Activated T-helper 1 cell treated with anti-CD3 and anti-CD28 coated beads, Interleukin-12 subunit alpha, Interleukin-12 subunit beta, Interleukin-2, Interleukin-4 antibody, amounts not matched to agents 30 ng/mL and 10 ng/mL and 1 ng/mL, durations not matched to agents 14 hours and 24 hours and 36 hours (primary cell): ENCODE measurements at regions of chr22 and their contacts with region 1.

Region 1: DNA sequence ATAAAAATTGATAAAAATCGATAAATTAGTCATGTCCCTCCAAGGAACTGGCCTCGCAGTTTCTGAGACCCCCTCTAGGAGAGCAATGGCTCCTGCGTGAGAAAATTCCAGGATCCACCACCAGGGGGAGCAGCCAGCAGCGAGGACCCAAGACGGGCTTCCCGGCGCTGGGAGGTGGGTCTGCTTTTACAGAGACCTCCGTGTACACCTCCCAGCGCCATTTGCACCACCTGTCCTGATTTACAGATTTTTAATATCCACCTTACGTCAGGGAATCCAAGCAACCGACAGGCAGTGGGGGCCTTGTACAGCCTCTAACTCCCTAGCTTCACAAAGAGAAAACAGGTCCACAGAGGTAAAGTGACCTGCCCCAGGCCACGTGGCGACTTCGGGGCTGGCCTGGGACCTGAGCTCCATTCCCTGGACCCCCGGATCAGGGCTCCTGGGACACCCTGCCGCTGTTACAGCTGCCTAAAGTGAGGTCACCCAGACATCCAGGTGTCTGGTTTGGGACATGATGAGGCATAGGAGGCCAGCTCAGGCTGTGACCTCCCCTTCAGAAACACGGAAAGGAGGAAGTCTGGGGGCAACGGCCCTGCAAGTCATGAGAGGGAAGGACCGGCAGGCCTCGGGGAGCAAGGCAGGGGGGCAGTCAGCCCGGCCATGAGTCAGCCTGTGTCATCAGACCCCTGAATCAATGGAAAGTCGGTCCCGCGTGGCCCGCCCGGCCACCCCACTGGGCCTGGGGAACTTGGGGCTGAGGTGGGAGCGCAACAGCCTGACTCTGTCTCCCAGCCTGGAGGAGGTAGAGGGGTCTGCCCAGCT is 3.5 kb downstream of the OSM start:
- DNase-seq: peak; percentile 67
- H3K4me3 Mint-ChIP-seq: peak overlapping the region; percentile 95
- H3K27ac Mint-ChIP-seq: peak overlapping the region; percentile 94
- H3K4me1 Mint-ChIP-seq: peaks cover 64% of the 10 kb centered on the region
- H3K27me3 Mint-ChIP-seq: no peaks in the 10 kb centered on the region

Region 2: GRCh38 chr22:29603358-29604075 is 659.6 kb before region 1 on chr22 and contains the start of gene NF2:
- intact Hi-C with region 1: loop called (anchors 5 kb)
- DNase-seq: peak; percentile 99
- H3K4me3 Mint-ChIP-seq: peak within 1 kb of the TSS; percentile 96
- H3K27ac Mint-ChIP-seq: peak within 1 kb of the TSS; percentile 98
- H3K4me1 Mint-ChIP-seq: peaks cover 23% of the 10 kb centered on the region
- H3K27me3 Mint-ChIP-seq: no peaks in the 10 kb centered on the region
- total RNA-seq, gene NF2: 65.7 and 66.1 TPM in 2 replicates

Region 3: GRCh38 chr22:30150212-30150611 is 112.9 kb before region 1 on chr22:
- intact Hi-C with region 1: no loop called
- DNase-seq: no peak
- H3K4me3 Mint-ChIP-seq: no peak overlapping the region
- H3K27ac Mint-ChIP-seq: no peak overlapping the region
- H3K4me1 Mint-ChIP-seq: peaks cover 27% of the 10 kb centered on the region
- H3K27me3 Mint-ChIP-seq: no peaks in the 10 kb centered on the region

Region 4: GRCh38 chr22:30167296-30167695 is 95.8 kb before region 1 on chr22:
- intact Hi-C with region 1: loop called (anchors 2 kb)
- DNase-seq: no peak
- H3K4me3 Mint-ChIP-seq: no peak overlapping the region
- H3K27ac Mint-ChIP-seq: no peak overlapping the region
- H3K4me1 Mint-ChIP-seq: peaks cover 16% of the 10 kb centered on the region
- H3K27me3 Mint-ChIP-seq: no peaks in the 10 kb centered on the region

Region 5: GRCh38 chr22:30196141-30196879 is 66.8 kb before region 1 on chr22:
- intact Hi-C with region 1: loop called (anchors 1 kb)
- DNase-seq: peak; percentile 59
- H3K4me3 Mint-ChIP-seq: peak overlapping the region; percentile 64
- H3K27ac Mint-ChIP-seq: peak overlapping the region; percentile 96
- H3K4me1 Mint-ChIP-seq: peaks cover 74% of the 10 kb centered on the region
- H3K27me3 Mint-ChIP-seq: no peaks in the 10 kb centered on the region

Region 6: GRCh38 chr22:30289134-30289979 is 26.2 kb after region 1 on chr22 and contains the start of gene CASTOR1:
- intact Hi-C with region 1: loop called (anchors 1 kb)
- DNase-seq: peak; percentile 90
- H3K4me3 Mint-ChIP-seq: peak within 1 kb of the TSS; percentile 87
- H3K27ac Mint-ChIP-seq: peak within 1 kb of the TSS; percentile 81
- H3K4me1 Mint-ChIP-seq: peaks cover 56% of the 10 kb centered on the region
- H3K27me3 Mint-ChIP-seq: no peaks in the 10 kb centered on the region
- total RNA-seq, gene CASTOR1: 5.6 and 8.8 TPM in 2 replicates

Region 7: DNA sequence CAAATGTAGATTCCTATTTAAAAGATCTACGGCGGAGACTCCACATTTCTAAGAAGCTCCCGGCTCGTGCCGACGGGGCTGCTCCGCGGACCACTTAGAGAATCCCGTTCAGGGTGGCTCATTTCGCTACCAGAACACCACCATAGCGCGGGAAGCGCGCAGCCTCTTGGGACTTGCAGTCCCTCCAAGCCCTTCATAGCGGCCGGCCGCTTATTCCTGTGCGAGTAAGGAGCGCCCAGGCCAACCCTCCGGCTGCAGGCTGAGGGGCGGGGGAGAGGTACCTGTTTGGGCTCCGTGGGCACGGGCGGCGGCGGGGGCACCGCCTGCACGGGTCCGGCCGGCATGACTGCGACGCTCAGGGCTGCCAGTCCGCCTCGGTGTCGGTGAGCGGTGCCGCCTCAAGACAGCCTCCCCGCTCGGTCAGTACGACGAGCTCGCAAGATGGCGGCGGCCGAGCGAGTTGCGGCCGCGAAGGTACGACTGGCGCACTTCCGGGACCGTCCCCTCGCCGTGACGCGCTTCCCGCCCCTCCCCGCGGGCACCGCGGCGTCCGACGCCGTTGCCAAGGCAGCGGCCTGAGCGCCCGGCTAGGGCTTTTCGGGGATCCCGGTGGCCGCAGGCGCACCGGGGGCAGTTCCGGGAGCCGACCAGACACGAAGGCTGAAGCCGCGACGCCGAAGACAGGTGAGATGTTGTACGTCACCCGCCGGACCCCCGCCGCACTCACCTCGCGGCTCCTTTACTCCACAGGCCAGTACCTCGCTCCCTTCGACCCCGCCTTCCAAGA is 93.5 kb after region 1 on chr22 and contains the starts of genes CCDC157 and SF3A1:
- intact Hi-C with region 1: loop called (anchors 1 kb)
- DNase-seq: peak; percentile 88
- H3K4me3 Mint-ChIP-seq: peak within 1 kb of the TSS; percentile 94
- H3K27ac Mint-ChIP-seq: peak within 1 kb of the TSS; percentile 90
- H3K4me1 Mint-ChIP-seq: peaks cover 43% of the 10 kb centered on the region
- H3K27me3 Mint-ChIP-seq: peaks cover 8% of the 10 kb centered on the region
- total RNA-seq, gene CCDC157: 2.4 and 3.0 TPM in 2 replicates
- total RNA-seq, gene SF3A1: 308 and 310 TPM in 2 replicates